HepG2 (cell line): ENCODE measurements at regions of chr9 and their contacts with region 1.

Region 1: DNA sequence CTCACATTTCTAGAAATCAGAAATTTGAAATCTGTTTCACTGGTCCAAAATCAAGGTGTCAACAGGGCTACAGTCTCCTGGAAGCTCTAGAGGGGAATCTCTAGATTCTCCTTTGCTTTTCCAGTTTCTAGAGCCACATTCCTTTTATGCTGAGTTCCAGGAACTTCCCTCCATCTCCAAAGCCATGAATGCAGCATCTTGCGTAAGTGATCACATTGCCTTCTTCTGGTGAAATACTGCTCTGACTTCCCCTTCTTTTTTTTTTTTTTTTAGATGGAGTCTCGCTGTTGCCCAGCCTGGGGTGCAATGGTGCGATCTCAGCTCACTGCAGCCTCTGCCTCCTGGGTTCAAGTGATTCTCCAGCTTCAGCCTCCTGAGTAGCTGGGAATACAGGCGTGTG is 23.8 kb downstream of the GDA start:
- DNase-seq: no peak
- ATAC-seq: no peak
- H3K4me3 ChIP-seq: no peak overlapping the region
- H3K27ac ChIP-seq: no peak overlapping the region
- H3K4me1 ChIP-seq: no peaks in the 10 kb centered on the region
- H3K27me3 ChIP-seq: no peaks in the 10 kb centered on the region
- CTCF ChIP-seq: no peak
- EP300 ChIP-seq: no peak
- POLR2A ChIP-seq: no peak
- RAD21 ChIP-seq: no peak

Region 2: GRCh38 chr9:71916834-71917534 is 256.1 kb before region 1 on chr9:
- CTCF ChIA-PET with region 1: no interaction called
- POLR2A ChIA-PET with region 1: no interaction called
- in situ Hi-C with region 1: no loop called
- intact Hi-C with region 1: no loop called
- DNase-seq: no peak
- ATAC-seq: no peak
- H3K4me3 ChIP-seq: no peak overlapping the region
- H3K27ac ChIP-seq: no peak overlapping the region
- H3K4me1 ChIP-seq: peaks cover 28% of the 10 kb centered on the region
- H3K27me3 ChIP-seq: no peaks in the 10 kb centered on the region; a peak in 1 of 5 replicates
- CTCF ChIP-seq: no peak
- EP300 ChIP-seq: no peak
- POLR2A ChIP-seq: no peak
- RAD21 ChIP-seq: no peak

Region 3: DNA sequence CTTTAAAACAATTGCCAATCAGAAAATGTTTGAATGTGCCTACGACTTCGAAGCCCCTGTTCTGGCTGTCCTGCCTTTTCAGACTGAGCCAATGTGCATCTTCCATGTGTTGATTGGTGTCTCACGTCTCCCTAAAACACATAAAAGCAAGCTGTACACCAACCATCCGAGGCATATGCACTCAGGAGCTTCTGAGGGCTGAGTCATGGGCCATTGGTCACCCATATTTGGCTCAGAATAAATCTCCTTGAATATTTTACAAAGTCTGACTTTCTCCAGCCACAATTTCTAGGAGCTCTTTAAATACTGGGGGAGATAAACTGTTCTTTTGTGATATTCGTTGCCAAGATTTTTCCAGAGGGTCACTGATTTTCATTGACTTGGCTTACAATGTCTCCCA is 166.6 kb before region 1 on chr9:
- CTCF ChIA-PET with region 1: no interaction called
- POLR2A ChIA-PET with region 1: no interaction called
- in situ Hi-C with region 1: no loop called
- intact Hi-C with region 1: loop called (anchors 1 kb)
- DNase-seq: no peak
- ATAC-seq: no peak
- H3K4me3 ChIP-seq: no peak overlapping the region
- H3K27ac ChIP-seq: no peak overlapping the region
- H3K4me1 ChIP-seq: peaks cover 13% of the 10 kb centered on the region; the same call in 1 of the 2 replicates
- H3K27me3 ChIP-seq: no peaks in the 10 kb centered on the region
- CTCF ChIP-seq: no peak
- EP300 ChIP-seq: no peak
- POLR2A ChIP-seq: no peak
- RAD21 ChIP-seq: no peak

Region 4: GRCh38 chr9:72704688-72705375 is 531.8 kb after region 1 on chr9:
- CTCF ChIA-PET with region 1: no interaction called
- POLR2A ChIA-PET with region 1: no interaction called
- in situ Hi-C with region 1: no loop called
- intact Hi-C with region 1: no loop called
- DNase-seq: no peak
- ATAC-seq: no peak
- H3K4me3 ChIP-seq: no peak overlapping the region
- H3K27ac ChIP-seq: no peak overlapping the region
- H3K4me1 ChIP-seq: no peaks in the 10 kb centered on the region
- H3K27me3 ChIP-seq: no peaks in the 10 kb centered on the region; a peak in 1 of 5 replicates
- CTCF ChIP-seq: no peak
- EP300 ChIP-seq: no peak
- POLR2A ChIP-seq: no peak
- RAD21 ChIP-seq: no peak